Caco-2 (cell line): ENCODE measurements at regions of chr5 and their contacts with region 1.

Region 1: DNA sequence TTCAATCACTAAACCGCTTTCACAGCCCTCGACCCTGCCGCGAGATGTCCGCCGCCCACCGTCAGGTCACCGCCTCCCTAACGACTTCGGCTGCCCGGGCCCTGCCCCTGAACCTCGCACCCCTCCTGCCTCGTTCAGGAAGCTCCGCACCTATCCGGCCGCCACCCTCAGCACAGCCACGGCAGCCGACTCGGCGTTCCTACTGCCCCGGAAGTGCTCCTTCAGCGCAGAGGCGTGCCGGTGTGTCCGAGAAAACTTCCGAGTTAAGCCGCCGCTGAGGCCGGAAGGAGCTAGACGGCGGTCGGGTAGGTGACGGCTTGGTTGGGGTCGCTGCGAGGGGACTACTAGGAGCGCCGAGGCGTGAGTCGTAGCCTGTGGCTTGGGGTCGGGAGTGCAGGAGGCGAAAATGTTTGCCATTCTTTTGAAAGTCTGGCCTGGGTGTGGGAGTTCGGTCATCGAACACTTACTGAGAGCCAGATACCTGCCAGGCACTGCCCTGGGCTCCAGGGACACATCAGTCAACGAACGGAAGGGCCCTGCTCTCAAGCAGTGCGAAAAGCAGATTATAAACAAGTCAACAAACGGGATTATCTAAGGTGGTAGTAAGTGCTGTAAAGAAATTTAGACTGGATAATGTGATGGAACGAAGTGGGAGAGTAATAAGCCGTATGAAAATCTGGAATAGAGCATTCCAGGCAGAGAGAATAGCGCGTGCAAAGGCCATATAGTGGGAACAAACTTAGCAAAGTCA is at the starts of genes FAM114A2 and MFAP3:
- DNase-seq: peak; percentile 92 to 95
- H3K4me3 ChIP-seq: peak within 1 kb of the TSS; percentile 54
- H3K4me3 Mint-ChIP-seq: peak within 1 kb of the TSS; percentile 92
- H3K27ac Mint-ChIP-seq: peak within 1 kb of the TSS; percentile 89
- H3K4me1 ChIP-seq: 0 out of 2 replicates have a peak, but pooled peaks cover 4% of the 10 kb centered on the region
- H3K4me1 Mint-ChIP-seq: peaks cover 6% of the 10 kb centered on the region
- H3K27me3 ChIP-seq: no peaks in the 10 kb centered on the region
- H3K27me3 Mint-ChIP-seq: no peaks in the 10 kb centered on the region
- CTCF ChIP-seq: no peak
- total RNA-seq, gene FAM114A2: 15.6 and 16.0 TPM in 2 replicates
- total RNA-seq, gene MFAP3: 21.9 and 24.1 TPM in 2 replicates

Region 2: DNA sequence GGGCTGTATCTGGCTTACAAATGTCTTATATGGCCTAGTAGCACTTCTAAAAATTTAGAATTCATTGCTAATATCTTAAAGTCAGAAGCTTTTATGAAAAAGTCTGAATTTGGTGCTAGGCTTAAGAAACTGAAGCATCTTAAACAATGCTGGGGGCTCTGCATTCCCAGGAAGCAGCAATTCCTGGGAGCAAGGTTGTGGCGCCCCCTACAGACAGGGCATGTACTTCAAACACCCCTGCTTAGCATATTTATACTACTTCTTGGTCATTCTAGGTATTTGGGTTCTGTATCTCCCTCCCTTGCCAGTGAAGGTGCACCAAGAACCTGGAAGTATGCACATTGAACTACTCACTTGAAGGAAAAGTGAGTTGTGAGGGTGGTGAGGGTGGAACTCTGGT is 613.0 kb before region 1 on chr5:
- CTCF ChIA-PET with region 1: no interaction called
- POLR2A ChIA-PET with region 1: no interaction called
- intact Hi-C with region 1: no loop called
- DNase-seq: peak in 1 of 2 experiments; percentile 5
- H3K4me3 ChIP-seq: no peak overlapping the region
- H3K4me3 Mint-ChIP-seq: no peak overlapping the region
- H3K27ac Mint-ChIP-seq: no peak overlapping the region
- H3K4me1 ChIP-seq: no peaks in the 10 kb centered on the region
- H3K4me1 Mint-ChIP-seq: no peaks in the 10 kb centered on the region
- H3K27me3 ChIP-seq: no peaks in the 10 kb centered on the region
- H3K27me3 Mint-ChIP-seq: peaks cover 8% of the 10 kb centered on the region
- CTCF ChIP-seq: peak in 1 of 2 experiments; percentile 50

Region 3: GRCh38 chr5:153974131-153974812 is 64.6 kb before region 1 on chr5:
- CTCF ChIA-PET with region 1: interaction called, 5 read pairs
- POLR2A ChIA-PET with region 1: no interaction called
- intact Hi-C with region 1: loop called (anchors 1 kb)
- DNase-seq: peak in 1 of 2 experiments; percentile 52
- H3K4me3 ChIP-seq: no peak overlapping the region
- H3K4me3 Mint-ChIP-seq: no peak overlapping the region
- H3K27ac Mint-ChIP-seq: no peak overlapping the region
- H3K4me1 ChIP-seq: no peaks in the 10 kb centered on the region
- H3K4me1 Mint-ChIP-seq: no peaks in the 10 kb centered on the region
- H3K27me3 ChIP-seq: no peaks in the 10 kb centered on the region
- H3K27me3 Mint-ChIP-seq: peaks cover 11% of the 10 kb centered on the region
- CTCF ChIP-seq: peak; percentile 80 to 81

Region 4: DNA sequence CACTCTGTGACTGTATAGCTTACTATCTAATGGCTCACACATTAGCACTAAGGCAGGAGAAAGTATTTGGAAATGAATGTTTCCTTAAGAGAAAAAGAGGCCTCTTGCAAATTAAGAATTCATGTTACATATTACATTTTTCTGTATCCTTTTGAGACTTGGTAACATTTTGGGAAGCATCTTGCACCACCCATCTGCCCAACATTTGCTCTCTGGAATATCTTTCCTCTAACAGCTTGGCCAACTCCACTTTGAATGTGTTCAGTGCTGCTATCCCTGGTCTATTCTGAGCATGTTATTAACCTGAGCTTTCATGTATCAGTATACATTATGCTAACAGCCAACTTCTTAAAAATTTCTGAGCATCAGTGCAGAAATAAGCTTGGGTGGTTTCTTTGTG is 27.1 kb after region 1 on chr5:
- CTCF ChIA-PET with region 1: no interaction called
- POLR2A ChIA-PET with region 1: interaction called, 3 read pairs
- intact Hi-C with region 1: loop called (anchors 2 kb)
- DNase-seq: no peak
- H3K4me3 ChIP-seq: no peak overlapping the region
- H3K4me3 Mint-ChIP-seq: no peak overlapping the region
- H3K27ac Mint-ChIP-seq: no peak overlapping the region
- H3K4me1 ChIP-seq: no peaks in the 10 kb centered on the region
- H3K4me1 Mint-ChIP-seq: no peaks in the 10 kb centered on the region
- H3K27me3 ChIP-seq: no peaks in the 10 kb centered on the region
- H3K27me3 Mint-ChIP-seq: no peaks in the 10 kb centered on the region
- CTCF ChIP-seq: no peak